H1 (cell line): ENCODE measurements at regions of chr9 and their contacts with region 1.

Region 1: DNA sequence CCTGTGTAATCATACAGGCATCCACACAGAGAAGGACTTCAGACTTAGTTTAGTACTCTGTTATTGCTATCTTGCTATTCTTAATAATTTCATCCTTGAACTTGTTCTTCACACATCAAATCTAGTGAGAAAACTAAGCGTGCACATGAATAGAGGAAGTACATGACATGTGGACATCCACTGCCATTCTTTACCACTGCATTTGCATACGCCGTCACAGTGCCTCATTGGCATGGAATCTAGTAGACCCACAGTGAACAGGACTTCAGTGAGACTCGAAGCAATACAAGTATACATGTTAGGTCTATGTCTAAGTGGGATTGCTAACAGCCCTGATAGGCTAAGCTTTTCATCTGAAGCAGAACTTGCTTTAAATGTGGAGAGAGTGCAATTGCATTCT is 592.1 kb downstream of the TLE4 start:
- DNase-seq: no peak
- H3K4me3 ChIP-seq: no peak overlapping the region
- H3K27ac ChIP-seq: no peak overlapping the region
- H3K4me1 ChIP-seq: no peaks in the 10 kb centered on the region
- H3K27me3 ChIP-seq: no peaks in the 10 kb centered on the region
- CTCF ChIP-seq: no peak
- EP300 ChIP-seq: no peak
- POLR2A ChIP-seq: no peak
- RAD21 ChIP-seq: no peak

Region 2: GRCh38 chr9:80175286-80176150 is 11.6 kb after region 1 on chr9:
- CTCF ChIA-PET with region 1: interaction called, 14 read pairs
- POLR2A ChIA-PET with region 1: no interaction called
- DNase-seq: no peak
- H3K4me3 ChIP-seq: no peak overlapping the region
- H3K27ac ChIP-seq: no peak overlapping the region
- H3K4me1 ChIP-seq: no peaks in the 10 kb centered on the region
- H3K27me3 ChIP-seq: no peaks in the 10 kb centered on the region
- CTCF ChIP-seq: peak in 2 of 3 experiments; percentile 28 to 34; a peak in 2 of 4 replicates
- EP300 ChIP-seq: no peak
- POLR2A ChIP-seq: no peak
- RAD21 ChIP-seq: peak; percentile 63 to 66

Region 3: GRCh38 chr9:80242002-80242401 is 78.1 kb after region 1 on chr9:
- CTCF ChIA-PET with region 1: no interaction called
- POLR2A ChIA-PET with region 1: no interaction called
- DNase-seq: no peak
- H3K4me3 ChIP-seq: no peak overlapping the region
- H3K27ac ChIP-seq: no peak overlapping the region
- H3K4me1 ChIP-seq: no peaks in the 10 kb centered on the region
- H3K27me3 ChIP-seq: no peaks in the 10 kb centered on the region
- CTCF ChIP-seq: no peak
- EP300 ChIP-seq: no peak
- POLR2A ChIP-seq: no peak
- RAD21 ChIP-seq: no peak